ENCODE measurements at regions of chr7 and their contacts with region 1.

Region 1: GRCh38 chr7:99975782-99976521 is at the start of gene AZGP1:
- DNase-seq: peak; percentile 44 to 58
- ATAC-seq: peak; percentile 78 to 96 (median 90)
- H3K4me3 ChIP-seq: peak within 1 kb of the TSS in 8 of 10 donors; percentile 8 to 36 (median 20)
- H3K27ac ChIP-seq: peak within 1 kb of the TSS in 8 of 10 donors; percentile 9 to 74 (median 58)
- H3K4me1 ChIP-seq: no peaks in the 10 kb centered on the region
- H3K27me3 ChIP-seq: peaks cover 0 to 7% (median 2%) of the 10 kb centered on the region in 7 donors
- CTCF ChIP-seq: no peak
- total RNA-seq, gene AZGP1: 37.8 to 335 (median 74.4) TPM

Region 2: GRCh38 chr7:99928994-99929729 is 46.8 kb before region 1 on chr7 and contains the start of gene GJC3:
- intact Hi-C with region 1: loop called in 1 of 10 experiments (anchors 10 kb)
- DNase-seq: peak; percentile 68 to 73
- ATAC-seq: peak; percentile 93 to 100 (median 96)
- H3K4me3 ChIP-seq: peak within 1 kb of the TSS in 8 of 10 donors; percentile 8 to 50 (median 42)
- H3K27ac ChIP-seq: peak within 1 kb of the TSS; percentile 14 to 79 (median 70)
- H3K4me1 ChIP-seq: peaks cover 4 to 21% (median 11%) of the 10 kb centered on the region in 9 donors
- H3K27me3 ChIP-seq: peaks cover 0 to 18% (median 0%) of the 10 kb centered on the region in 7 donors
- CTCF ChIP-seq: peak; percentile 12 to 75 (median 55)
- total RNA-seq, gene GJC3: 0.44 TPM in 1 of 10 donors, not detected in the others

Region 3: GRCh38 chr7:99949638-99950228 is 26.2 kb before region 1 on chr7:
- intact Hi-C with region 1: no loop called
- DNase-seq: no peak
- ATAC-seq: no peak
- H3K4me3 ChIP-seq: no peak overlapping the region
- H3K27ac ChIP-seq: no peak overlapping the region
- H3K4me1 ChIP-seq: peaks cover 0 to 9% (median 0%) of the 10 kb centered on the region in 9 donors
- H3K27me3 ChIP-seq: peaks cover 0 to 12% (median 4%) of the 10 kb centered on the region in 7 donors
- CTCF ChIP-seq: peak in 8 of 9 donors; percentile 17 to 61 (median 45)

Region 4: DNA sequence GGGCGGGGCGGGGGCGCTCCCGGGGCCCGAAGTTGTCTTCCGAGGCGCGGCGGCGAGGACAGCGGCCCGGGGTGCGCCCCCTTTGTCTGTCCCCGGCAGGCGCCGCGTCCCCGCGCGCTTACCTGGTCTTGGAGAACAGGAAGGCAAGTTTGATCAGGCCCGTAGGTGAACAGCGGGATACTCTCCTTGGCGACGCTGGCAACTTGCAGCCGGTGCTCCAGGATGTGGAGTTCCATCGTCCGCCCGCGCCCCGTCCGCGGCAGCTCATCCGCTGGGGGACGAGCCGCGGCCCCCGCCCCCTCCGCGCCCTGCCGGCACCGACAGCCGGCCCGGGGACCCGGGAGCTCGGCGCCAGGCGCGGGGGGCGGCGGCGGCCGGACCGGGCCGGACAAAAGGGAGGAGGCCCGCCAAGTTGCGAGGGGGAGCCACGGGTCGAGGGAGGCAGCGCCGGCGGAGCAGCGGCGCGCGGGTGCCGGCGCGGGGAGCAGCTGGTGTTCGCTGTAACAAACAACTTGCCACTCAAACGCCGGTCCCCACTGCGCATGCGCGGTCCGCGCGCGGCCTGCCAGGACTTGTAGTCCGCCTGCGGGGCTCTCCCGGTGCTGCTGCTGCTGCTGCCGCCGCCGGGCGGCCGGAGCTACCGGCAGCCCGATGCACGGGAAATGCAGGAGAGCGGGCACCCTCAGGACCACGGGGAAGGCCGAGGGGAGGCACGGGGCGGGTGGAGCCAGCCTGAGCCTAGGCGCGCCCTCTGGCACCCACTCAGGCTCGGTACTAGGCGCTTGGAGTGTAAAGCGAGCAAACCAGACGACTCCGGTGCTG is 296.0 kb after region 1 on chr7:
- intact Hi-C with region 1: no loop called
- DNase-seq: peak; percentile 98 to 99
- ATAC-seq: peak; percentile 92 to 97 (median 95)
- H3K4me3 ChIP-seq: peak overlapping the region; percentile 50 to 94 (median 70)
- H3K27ac ChIP-seq: peak overlapping the region; percentile 50 to 82 (median 58)
- H3K4me1 ChIP-seq: peaks cover 0 to 24% (median 8%) of the 10 kb centered on the region in 9 donors
- H3K27me3 ChIP-seq: no peaks in the 10 kb centered on the region
- CTCF ChIP-seq: peak in 7 of 9 donors; percentile 10 to 54 (median 44)

Measured in heart right ventricle (tissue), 16 donors.